Heart right ventricle (tissue), 16 donors: ENCODE measurements at regions of chr1 and their contacts with region 1.

Region 1: GRCh38 chr1:68585351-68585750 is 88.5 kb upstream of the DEPDC1 start:
- DNase-seq: no peak
- ATAC-seq: no peak
- H3K4me3 ChIP-seq: no peak overlapping the region
- H3K27ac ChIP-seq: no peak overlapping the region
- H3K4me1 ChIP-seq: no peaks in the 10 kb centered on the region
- H3K27me3 ChIP-seq: no peaks in the 10 kb centered on the region
- CTCF ChIP-seq: no peak

Region 2: DNA sequence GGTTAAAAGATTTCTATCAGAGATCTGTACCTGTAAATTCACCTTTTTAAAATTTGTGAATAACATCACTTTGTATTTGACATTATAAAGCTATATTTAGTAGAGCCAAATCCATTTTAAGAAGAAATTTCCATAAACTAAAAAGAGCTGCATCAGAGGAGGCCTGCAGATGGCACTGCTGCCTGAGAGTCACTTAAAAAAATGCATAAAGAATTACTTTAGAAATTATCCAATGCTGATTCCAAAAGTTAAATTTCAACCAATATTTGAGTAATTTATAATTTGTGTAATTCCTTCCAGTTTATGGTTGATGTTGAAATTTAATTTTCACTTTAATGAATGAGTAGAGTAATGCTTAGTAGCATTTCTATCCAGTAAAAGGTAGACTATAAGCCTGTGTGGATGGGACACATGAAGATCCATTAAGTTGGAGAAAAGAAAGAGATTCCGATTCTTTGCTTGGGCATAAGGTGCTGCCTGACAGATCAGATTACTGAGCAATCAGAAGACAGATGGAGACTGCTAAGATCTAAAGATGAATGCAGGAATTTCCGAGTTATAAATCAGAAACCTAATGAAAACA is 114.9 kb before region 1 on chr1:
- intact Hi-C with region 1: loop called in 1 of 10 experiments (anchors 10 kb)
- DNase-seq: no peak
- ATAC-seq: no peak
- H3K4me3 ChIP-seq: no peak overlapping the region
- H3K27ac ChIP-seq: no peak overlapping the region
- H3K4me1 ChIP-seq: no peaks in the 10 kb centered on the region
- H3K27me3 ChIP-seq: no peaks in the 10 kb centered on the region
- CTCF ChIP-seq: peak; percentile 24 to 77 (median 59)

Region 3: DNA sequence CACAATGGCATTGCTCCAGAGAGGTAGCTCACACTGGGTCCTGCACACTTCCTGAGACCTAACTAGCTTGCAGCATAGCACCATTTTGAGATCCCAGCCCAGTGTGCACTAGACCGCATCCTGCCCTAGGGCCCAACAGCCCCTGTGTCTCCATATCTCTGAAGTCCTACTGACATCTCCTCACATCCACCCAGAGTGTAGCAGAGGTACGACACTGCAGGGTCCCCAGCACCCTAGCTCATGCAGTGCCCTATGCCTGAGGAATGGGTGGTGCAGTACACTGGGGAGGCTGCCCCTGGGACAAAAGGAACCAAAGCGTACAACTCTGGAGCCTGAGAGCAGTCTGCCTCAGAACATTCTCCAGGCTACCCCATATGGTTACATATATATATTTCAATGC is 22.9 kb after region 1 on chr1:
- intact Hi-C with region 1: no loop called
- DNase-seq: no peak
- ATAC-seq: no peak
- H3K4me3 ChIP-seq: no peak overlapping the region
- H3K27ac ChIP-seq: no peak overlapping the region
- H3K4me1 ChIP-seq: no peaks in the 10 kb centered on the region
- H3K27me3 ChIP-seq: no peaks in the 10 kb centered on the region
- CTCF ChIP-seq: no peak